PC-9 (cell line): ENCODE measurements at regions of chr10 and their contacts with region 1.

Region 1: DNA sequence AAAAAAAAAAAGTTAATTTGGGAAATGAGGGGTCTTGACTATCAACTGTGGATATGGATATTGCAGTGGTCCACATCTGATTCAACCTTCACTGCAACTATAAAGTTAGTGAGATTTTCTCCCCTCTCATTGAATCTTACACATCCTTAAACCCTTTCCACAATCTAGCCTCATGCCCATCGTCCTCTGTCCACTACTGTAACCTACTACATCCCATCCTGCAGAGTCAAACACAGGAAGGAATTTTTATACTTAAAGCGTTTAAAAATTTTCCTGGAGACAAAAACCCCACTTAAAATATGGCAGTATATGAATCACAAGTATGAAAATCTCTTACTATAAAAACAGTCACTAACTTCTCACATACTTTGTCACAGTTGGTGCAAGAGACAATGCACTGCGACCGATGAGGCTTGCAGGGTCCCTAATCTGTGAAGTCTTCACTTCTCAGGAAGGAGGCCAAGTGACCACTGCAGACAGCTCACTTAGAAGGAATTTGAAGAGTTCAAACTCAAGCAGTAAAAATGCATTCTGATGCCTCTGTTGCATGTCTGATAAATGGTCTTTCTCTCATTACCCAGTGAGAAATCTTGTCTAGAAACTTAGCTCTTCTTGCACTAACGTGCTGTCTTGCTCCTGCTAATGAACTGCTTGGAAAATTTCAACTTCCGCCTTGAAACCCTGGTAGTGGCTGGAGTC is 50.3 kb upstream of the ST8SIA6 start:
- DNase-seq: peak in 1 of 2 experiments; percentile 4
- H3K4me3 ChIP-seq: no peak overlapping the region
- H3K27ac ChIP-seq: no peak overlapping the region
- H3K4me1 ChIP-seq: no peaks in the 10 kb centered on the region
- H3K27me3 ChIP-seq: no peaks in the 10 kb centered on the region
- CTCF ChIP-seq: no peak

Region 2: DNA sequence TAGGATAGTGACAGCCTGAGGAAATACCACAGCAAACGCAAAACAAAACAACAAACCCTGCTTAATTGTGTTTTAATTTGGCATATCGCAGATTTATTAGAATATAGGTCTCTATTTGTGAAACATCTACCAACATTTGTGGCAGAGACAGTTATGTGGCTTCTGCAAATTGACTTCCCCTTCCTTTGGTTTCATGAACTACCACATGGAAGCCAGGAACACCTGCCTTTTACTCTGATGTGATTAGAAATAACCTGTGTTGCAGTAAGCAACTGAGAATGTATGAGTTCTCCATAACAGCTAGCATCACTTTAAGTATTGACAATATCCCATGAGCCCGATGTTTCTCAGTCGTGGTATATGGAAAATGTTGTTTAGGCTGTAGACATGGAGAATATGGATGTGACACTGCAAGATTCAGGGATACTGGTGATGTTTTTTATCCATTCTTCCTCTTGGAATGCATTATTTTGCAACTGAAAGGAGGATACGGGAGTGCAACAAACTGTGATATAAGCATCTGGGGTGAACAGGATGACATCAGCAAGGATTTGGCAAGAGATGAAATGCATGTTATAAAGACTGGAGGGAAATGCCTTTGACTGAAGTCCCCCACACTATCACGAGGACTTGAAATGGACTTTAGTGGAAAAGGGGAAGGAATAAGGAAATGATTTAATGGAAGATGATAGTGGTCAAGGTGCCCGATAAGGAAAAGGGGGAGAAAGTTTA is 471.0 kb before region 1 on chr10:
- CTCF ChIA-PET with region 1: no interaction called
- POLR2A ChIA-PET with region 1: interaction called, 11 read pairs
- intact Hi-C with region 1: no loop called
- DNase-seq: no peak
- H3K4me3 ChIP-seq: no peak overlapping the region
- H3K27ac ChIP-seq: no peak overlapping the region
- H3K4me1 ChIP-seq: no peaks in the 10 kb centered on the region
- H3K27me3 ChIP-seq: no peaks in the 10 kb centered on the region
- CTCF ChIP-seq: no peak